ENCODE measurements at regions of chr10 and their contacts with region 1.

Region 1: DNA sequence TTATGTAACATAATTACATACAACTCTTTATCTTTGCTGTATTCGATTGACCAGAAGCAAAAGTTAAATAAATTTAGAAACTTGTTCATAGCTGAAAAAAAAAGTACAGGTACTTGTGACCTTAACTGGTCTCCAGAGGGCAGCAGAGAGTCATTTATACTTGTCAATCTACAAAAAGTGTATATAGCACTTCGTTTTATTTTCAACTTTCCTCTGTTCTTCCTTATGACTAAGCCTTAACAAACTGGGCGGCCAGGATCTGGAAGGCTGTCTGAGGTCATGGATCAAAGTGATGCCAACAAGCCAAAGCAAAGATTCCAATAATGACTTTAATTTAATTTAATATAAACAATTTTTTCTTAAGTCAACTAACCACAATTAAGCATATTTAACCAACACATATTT is 29.8 kb downstream of the C10orf67 start:
- DNase-seq: no peak
- ATAC-seq: peak; percentile 65 to 86 (median 72)
- H3K4me3 ChIP-seq: no peak overlapping the region
- H3K27ac ChIP-seq: no peak overlapping the region
- H3K4me1 ChIP-seq: no peaks in the 10 kb centered on the region
- H3K27me3 ChIP-seq: no peaks in the 10 kb centered on the region
- CTCF ChIP-seq: peak; percentile 81

Region 2: GRCh38 chr10:23459344-23459939 is 144.6 kb after region 1 on chr10:
- intact Hi-C with region 1: loop called in 1 of 2 experiments (anchors 10 kb)
- DNase-seq: no peak
- ATAC-seq: no peak
- H3K4me3 ChIP-seq: no peak overlapping the region
- H3K27ac ChIP-seq: no peak overlapping the region
- H3K4me1 ChIP-seq: peaks cover 7% of the 10 kb centered on the region
- H3K27me3 ChIP-seq: no peaks in the 10 kb centered on the region
- CTCF ChIP-seq: no peak

Region 3: DNA sequence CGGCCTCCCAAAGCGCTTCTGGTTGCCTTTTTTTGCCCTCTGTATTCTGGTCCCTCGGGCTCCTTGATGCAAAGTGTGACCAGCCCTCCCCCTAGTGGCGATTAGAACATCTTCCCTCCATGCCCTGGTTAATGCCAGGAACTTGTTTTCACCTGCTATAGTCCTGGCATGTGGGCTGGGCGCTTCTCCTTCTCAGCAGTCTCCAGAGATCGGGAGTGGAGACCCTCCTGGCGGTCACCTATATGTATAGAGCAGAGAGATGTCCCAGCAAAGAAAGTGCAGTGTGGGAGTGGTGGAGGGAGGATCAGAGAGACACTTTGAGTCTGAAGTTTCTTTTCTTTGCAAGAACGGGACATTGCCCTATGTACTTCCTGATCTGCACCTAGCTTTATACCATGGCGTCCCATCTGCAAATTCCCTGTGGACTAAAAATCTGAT is 388.2 kb after region 1 on chr10:
- intact Hi-C with region 1: loop called (anchors 5 kb)
- DNase-seq: peak in 1 of 2 donors; percentile 16
- ATAC-seq: peak; percentile 53 to 69 (median 64)
- H3K4me3 ChIP-seq: no peak overlapping the region
- H3K27ac ChIP-seq: no peak overlapping the region
- H3K4me1 ChIP-seq: no peaks in the 10 kb centered on the region
- H3K27me3 ChIP-seq: no peaks in the 10 kb centered on the region
- CTCF ChIP-seq: peak; percentile 68

Measured in psoas muscle (tissue), 8 donors.